ENCODE measurements at regions of chr16 and their contacts with region 1.

Region 1: DNA sequence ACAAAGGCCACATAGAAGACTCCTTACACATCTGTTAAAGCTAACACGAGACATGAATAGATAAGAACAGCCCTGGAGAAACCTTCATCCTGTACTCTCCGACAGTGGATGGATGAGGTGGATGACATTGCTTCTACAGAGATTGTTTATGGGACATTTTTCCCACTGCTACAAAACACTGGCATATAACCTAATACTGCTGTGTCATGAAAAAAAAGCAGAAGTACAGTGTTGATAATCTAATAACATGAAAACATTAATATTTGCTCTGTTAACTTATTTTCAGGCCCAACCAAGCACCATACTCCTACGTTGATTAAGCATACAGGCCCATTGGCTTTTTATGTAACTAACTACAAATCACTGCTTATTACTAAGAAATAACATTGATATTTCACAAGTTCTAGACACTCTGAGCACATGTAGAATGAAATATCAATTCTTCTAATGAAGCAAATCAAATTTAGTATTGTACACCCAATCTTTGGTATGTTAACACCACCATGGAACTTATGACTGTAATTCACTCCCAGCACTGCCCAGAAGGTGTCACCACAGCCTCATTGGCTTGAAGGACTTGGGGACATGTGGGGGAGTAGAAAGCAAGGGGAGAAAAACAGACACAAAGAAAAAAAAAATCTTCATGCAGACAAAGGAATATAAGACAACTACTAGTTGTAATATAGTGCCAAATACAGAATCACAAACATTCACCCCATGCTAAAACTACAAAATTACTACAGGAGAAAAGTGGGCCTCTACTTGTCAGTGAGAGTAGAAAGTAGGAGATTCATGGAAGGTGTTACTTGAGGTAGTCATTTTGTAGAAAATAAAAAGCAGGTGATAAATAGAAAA is 330.0 kb upstream of the PMFBP1 start:
- DNase-seq: peak; percentile 42
- ATAC-seq: peak; percentile 98
- H3K4me3 ChIP-seq: no peak overlapping the region
- H3K27ac ChIP-seq: no peak overlapping the region
- H3K4me1 ChIP-seq: no peaks in the 10 kb centered on the region
- H3K27me3 ChIP-seq: no peaks in the 10 kb centered on the region
- CTCF ChIP-seq: peak; percentile 82 to 93 (median 86)
- EP300 ChIP-seq: no peak
- POLR2A ChIP-seq: no peak
- RAD21 ChIP-seq: peak; percentile 99

Region 2: DNA sequence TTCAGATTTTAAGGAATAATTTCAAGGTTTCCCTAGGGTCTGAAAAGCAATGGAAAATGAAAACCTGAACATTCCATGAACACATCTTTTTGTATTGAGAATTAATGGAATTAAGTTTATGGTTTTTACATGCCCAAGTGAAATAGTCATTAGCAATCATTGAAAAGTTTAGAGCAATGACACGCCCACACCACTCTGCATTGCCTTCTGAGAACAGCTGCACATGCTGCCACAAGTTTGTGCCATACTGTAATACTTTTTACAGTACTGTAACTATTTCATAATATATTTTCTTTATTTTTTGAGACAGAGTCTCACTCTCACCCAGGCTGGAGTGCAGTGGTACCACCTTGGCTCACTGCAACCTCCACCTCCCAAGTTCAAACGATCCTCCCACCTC is 15.2 kb after region 1 on chr16:
- CTCF ChIA-PET with region 1: interaction called, 10 read pairs
- POLR2A ChIA-PET with region 1: no interaction called
- RAD21 ChIA-PET with region 1: interaction called, 3 read pairs
- SMC1A ChIA-PET with region 1: interaction called, 5 read pairs
- in situ Hi-C with region 1: no loop called
- intact Hi-C with region 1: no loop called
- DNase-seq: no peak
- ATAC-seq: no peak
- H3K4me3 ChIP-seq: no peak overlapping the region
- H3K27ac ChIP-seq: no peak overlapping the region
- H3K4me1 ChIP-seq: no peaks in the 10 kb centered on the region
- H3K27me3 ChIP-seq: no peaks in the 10 kb centered on the region
- CTCF ChIP-seq: no peak
- EP300 ChIP-seq: no peak
- POLR2A ChIP-seq: no peak
- RAD21 ChIP-seq: no peak

Region 3: DNA sequence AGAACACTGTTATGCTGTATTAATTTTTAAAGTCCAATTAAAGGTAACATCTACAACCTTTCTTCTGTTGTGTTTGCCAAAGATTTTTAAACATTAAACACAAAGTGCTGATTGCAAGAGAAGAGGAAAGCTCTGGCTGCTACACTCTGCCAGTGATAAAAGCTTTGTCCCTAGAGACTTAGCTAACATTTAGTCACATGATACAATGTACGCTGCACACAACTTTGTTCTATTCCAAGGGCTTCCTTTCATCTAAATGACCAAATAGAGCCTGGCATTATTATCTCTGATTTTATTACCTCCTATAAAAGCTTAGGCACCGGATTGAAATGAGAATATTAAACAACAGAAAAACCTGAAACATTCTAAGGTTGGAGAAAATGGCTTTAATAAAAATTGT is 58.7 kb after region 1 on chr16:
- CTCF ChIA-PET with region 1: no interaction called
- POLR2A ChIA-PET with region 1: no interaction called
- RAD21 ChIA-PET with region 1: no interaction called
- SMC1A ChIA-PET with region 1: no interaction called
- in situ Hi-C with region 1: no loop called
- intact Hi-C with region 1: no loop called
- DNase-seq: no peak
- ATAC-seq: 0 out of 3 replicates have a peak, but pooled peaks have one; percentile 32
- H3K4me3 ChIP-seq: no peak overlapping the region
- H3K27ac ChIP-seq: no peak overlapping the region
- H3K4me1 ChIP-seq: no peaks in the 10 kb centered on the region
- H3K27me3 ChIP-seq: no peaks in the 10 kb centered on the region
- CTCF ChIP-seq: no peak
- EP300 ChIP-seq: no peak
- POLR2A ChIP-seq: no peak
- RAD21 ChIP-seq: no peak

Region 4: GRCh38 chr16:72664509-72665225 is 162.7 kb after region 1 on chr16:
- CTCF ChIA-PET with region 1: interaction called, 8 read pairs
- POLR2A ChIA-PET with region 1: no interaction called
- RAD21 ChIA-PET with region 1: interaction called, 5 read pairs
- SMC1A ChIA-PET with region 1: interaction called, 13 read pairs
- in situ Hi-C with region 1: no loop called
- intact Hi-C with region 1: loop called (anchors 1 kb)
- DNase-seq: peak; percentile 94
- ATAC-seq: peak; percentile 98
- H3K4me3 ChIP-seq: peak overlapping the region; percentile 74
- H3K27ac ChIP-seq: peak overlapping the region; percentile 90
- H3K4me1 ChIP-seq: peaks cover under 1% of the 10 kb centered on the region
- H3K27me3 ChIP-seq: no peaks in the 10 kb centered on the region
- CTCF ChIP-seq: no peak
- EP300 ChIP-seq: no peak
- POLR2A ChIP-seq: peak; percentile 84
- RAD21 ChIP-seq: no peak

Region 5: DNA sequence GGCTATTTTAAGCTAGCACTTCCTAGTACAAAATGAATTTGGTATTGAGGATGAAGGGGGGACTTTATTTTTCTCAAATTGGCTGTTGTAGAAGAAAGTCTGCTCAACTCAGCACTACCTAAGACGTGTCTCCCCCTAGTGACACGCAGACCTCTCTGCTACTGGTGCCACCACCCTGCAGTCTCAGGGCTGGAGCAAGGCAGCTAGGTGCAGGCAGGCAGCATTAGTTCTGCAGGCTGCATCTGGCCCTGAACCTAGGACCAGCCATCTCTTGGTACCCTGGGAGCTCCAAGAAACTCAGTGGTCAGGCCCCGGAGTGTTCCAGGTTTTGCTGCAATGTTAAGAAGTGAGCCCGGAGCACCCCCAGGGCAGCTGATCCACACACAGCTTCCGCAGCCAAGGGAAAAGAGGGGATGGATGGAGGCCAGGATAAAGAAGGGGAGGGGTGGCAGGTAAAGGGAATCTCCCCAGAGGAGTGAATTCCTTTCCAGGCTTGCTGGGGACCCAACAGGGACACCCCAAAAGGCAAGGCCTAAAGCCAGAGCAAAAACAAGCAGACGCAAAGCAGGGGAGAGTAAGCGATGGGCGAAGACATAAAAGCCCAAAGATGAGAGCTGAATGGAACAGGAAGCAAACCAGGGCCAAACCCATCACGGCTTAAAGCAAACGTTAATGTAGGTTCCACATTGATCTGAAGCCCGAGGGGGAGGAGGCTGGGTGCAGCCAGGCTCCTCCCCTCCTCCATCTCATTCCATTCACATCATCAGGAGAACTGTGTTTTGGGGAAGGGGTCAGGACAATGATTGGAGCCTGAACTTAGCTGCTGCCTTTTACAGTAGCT is 345.4 kb after region 1 on chr16:
- CTCF ChIA-PET with region 1: interaction called, 18 read pairs
- POLR2A ChIA-PET with region 1: no interaction called
- RAD21 ChIA-PET with region 1: interaction called, 4 read pairs
- SMC1A ChIA-PET with region 1: interaction called, 9 read pairs
- in situ Hi-C with region 1: no loop called
- intact Hi-C with region 1: loop called (anchors 1 kb)
- DNase-seq: no peak
- ATAC-seq: peak; percentile 86
- H3K4me3 ChIP-seq: no peak overlapping the region
- H3K27ac ChIP-seq: no peak overlapping the region
- H3K4me1 ChIP-seq: peaks cover 15% of the 10 kb centered on the region
- H3K27me3 ChIP-seq: no peaks in the 10 kb centered on the region
- CTCF ChIP-seq: peak; percentile 52 to 59 (median 55)
- EP300 ChIP-seq: no peak
- POLR2A ChIP-seq: no peak
- RAD21 ChIP-seq: peak; percentile 58

Region 6: DNA sequence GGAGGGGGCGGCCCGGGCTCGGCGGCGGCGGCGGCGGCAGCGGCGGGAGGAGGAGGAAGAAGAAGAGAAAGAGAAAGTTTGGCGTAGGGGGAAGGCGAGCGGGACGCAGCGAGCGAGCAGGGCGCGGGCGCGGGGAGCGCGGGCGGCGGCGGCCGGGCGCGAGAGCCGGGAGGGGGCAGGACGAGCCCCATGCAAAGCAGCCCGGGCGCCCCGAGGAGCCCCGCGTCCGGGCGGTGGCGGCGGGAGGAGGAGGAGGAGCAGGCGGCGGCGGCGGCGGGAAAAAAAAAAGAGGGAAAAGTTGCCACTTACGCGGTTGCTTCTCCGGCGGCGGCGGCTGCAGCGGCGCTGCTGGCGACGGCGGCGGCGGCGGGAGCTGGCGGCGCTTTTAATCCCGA is 556.3 kb after region 1 on chr16:
- CTCF ChIA-PET with region 1: no interaction called
- POLR2A ChIA-PET with region 1: no interaction called
- RAD21 ChIA-PET with region 1: no interaction called
- SMC1A ChIA-PET with region 1: no interaction called
- in situ Hi-C with region 1: no loop called
- intact Hi-C with region 1: loop called (anchors 5 kb)
- DNase-seq: no peak
- ATAC-seq: peak; percentile 74
- H3K4me3 ChIP-seq: peak overlapping the region; percentile 72; the same call in 1 of the 2 replicates
- H3K27ac ChIP-seq: peak overlapping the region; percentile 39; the same call in 1 of the 2 replicates
- H3K4me1 ChIP-seq: peaks cover 13% of the 10 kb centered on the region
- H3K27me3 ChIP-seq: peaks cover 4 to 17% of the 10 kb centered on the region in 2 experiments
- CTCF ChIP-seq: no peak
- EP300 ChIP-seq: no peak
- POLR2A ChIP-seq: no peak
- RAD21 ChIP-seq: no peak

Region 7: GRCh38 chr16:73956587-73957494 is 1454.9 kb after region 1 on chr16:
- CTCF ChIA-PET with region 1: interaction called, 3 read pairs
- POLR2A ChIA-PET with region 1: no interaction called
- RAD21 ChIA-PET with region 1: no interaction called
- SMC1A ChIA-PET with region 1: no interaction called
- in situ Hi-C with region 1: no loop called
- intact Hi-C with region 1: loop called (anchors 5 kb)
- DNase-seq: peak; percentile 2
- ATAC-seq: peak; percentile 82
- H3K4me3 ChIP-seq: no peak overlapping the region
- H3K27ac ChIP-seq: no peak overlapping the region
- H3K4me1 ChIP-seq: no peaks in the 10 kb centered on the region
- H3K27me3 ChIP-seq: no peaks in the 10 kb centered on the region
- CTCF ChIP-seq: peak; percentile 78 to 85 (median 78)
- EP300 ChIP-seq: no peak
- POLR2A ChIP-seq: no peak
- RAD21 ChIP-seq: peak; percentile 70